ENCODE measurements at regions of chr5 and their contacts with region 1.

Region 1: GRCh38 chr5:141960449-141961202 is 2.6 kb upstream of the PCDH12 start:
- DNase-seq: peak; percentile 79 to 92
- ATAC-seq: peak; percentile 88 to 97
- H3K4me3 ChIP-seq: no peak overlapping the region
- H3K27ac ChIP-seq: peak overlapping the region; percentile 15 to 67; a peak in 5 of 6 replicates
- H3K4me1 ChIP-seq: 0 out of 3 replicates have a peak, but pooled peaks cover 4% of the 10 kb centered on the region
- CTCF ChIP-seq: peak; percentile 94
- EP300 ChIP-seq: no peak
- POLR2A ChIP-seq: no peak
- RAD21 ChIP-seq: peak; percentile 81 to 88

Region 2: GRCh38 chr5:140813119-140813518 is 1147.5 kb before region 1 on chr5:
- CTCF ChIA-PET with region 1: no interaction called
- POLR2A ChIA-PET with region 1: no interaction called
- DNase-seq: no peak
- ATAC-seq: no peak
- H3K4me3 ChIP-seq: no peak overlapping the region
- H3K27ac ChIP-seq: no peak overlapping the region
- H3K4me1 ChIP-seq: no peaks in the 10 kb centered on the region
- CTCF ChIP-seq: no peak
- EP300 ChIP-seq: no peak
- POLR2A ChIP-seq: no peak
- RAD21 ChIP-seq: no peak

Region 3: DNA sequence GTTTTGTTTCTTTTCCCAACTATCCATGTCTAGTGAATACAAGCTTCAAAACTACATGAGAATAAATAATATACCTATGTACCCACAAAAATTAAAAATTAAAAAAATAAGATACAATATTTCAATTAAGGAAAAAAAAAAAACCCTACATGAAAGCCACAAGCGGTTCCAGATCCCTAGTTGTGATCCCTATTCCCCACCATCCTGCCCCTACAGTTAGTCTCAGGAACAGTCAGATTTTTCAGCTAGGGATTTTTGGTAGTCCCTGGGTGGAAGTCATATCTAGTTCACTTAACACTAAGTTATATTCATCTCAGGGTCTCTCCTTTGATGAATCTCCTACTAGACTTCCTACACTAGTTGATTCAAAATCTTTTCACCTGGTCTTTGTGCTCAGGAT is 928.0 kb before region 1 on chr5:
- CTCF ChIA-PET with region 1: no interaction called
- POLR2A ChIA-PET with region 1: no interaction called
- DNase-seq: no peak
- ATAC-seq: no peak
- H3K4me3 ChIP-seq: no peak overlapping the region
- H3K27ac ChIP-seq: no peak overlapping the region
- H3K4me1 ChIP-seq: no peaks in the 10 kb centered on the region
- CTCF ChIP-seq: no peak
- EP300 ChIP-seq: no peak
- POLR2A ChIP-seq: no peak
- RAD21 ChIP-seq: no peak

Region 4: DNA sequence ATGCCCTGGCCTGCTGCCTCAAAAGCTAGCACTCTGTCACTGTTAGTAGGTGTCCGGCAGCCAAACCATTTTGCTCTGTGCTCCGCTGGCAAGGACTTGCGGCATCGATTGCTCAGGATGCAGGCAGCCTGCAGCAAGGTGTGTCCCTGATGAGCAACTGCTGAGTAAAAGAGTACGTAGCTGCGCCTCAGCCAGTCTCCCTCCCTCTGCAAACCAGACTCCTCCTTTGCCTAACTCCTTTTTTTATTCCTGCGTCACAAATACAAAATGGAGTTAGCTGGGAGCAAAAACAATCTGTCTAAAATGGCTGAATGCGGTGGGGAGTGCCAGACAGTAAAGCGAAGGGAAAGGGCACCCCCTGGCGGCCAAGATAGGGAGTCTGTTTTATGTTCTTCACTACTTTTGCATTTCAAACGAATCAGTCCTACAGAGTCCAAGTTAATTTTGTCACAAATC is 402.9 kb before region 1 on chr5:
- CTCF ChIA-PET with region 1: no interaction called
- POLR2A ChIA-PET with region 1: no interaction called
- DNase-seq: peak; percentile 31 to 83
- ATAC-seq: peak; percentile 84 to 91
- H3K4me3 ChIP-seq: no peak overlapping the region
- H3K27ac ChIP-seq: peak overlapping the region in 1 of 2 experiments; percentile 65; a peak in 2 of 6 replicates
- H3K4me1 ChIP-seq: no peaks in the 10 kb centered on the region
- CTCF ChIP-seq: peak; percentile 78
- EP300 ChIP-seq: no peak
- POLR2A ChIP-seq: no peak
- RAD21 ChIP-seq: peak; percentile 81 to 85

Region 5: DNA sequence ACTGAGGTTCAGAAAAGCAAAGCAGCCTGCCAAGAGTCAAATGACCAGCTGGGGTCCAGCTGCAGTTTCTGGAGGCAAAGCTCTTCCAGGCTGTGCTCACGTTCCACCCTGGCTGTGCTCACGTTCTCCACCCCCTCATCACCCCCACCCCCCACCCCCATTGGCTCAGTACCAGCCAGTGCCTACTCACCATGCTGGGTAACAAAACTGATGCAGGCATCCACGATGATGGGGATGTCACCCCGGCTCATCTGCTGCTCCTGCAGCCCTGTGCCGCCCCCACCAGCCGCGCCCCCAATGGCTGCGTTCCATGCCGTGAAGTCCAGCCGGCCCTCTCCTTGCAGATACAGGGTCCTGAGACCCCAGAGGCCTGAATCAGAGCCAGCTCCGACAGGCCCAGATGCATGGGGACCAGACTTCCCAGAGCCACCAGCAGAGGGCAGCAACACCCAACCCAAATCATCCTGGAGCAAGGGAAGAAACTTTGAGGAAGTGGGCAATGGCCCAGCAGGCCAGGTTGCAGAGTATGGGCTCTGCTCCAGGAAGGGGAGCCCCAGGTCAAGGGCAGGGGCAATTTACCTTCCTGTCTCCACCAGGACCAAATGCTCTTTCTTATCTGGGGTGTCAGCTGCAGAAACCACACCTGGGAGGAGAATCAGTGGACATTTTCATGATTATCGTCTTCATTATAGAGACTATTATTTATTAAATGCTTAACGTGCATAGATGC is 295.7 kb before region 1 on chr5:
- CTCF ChIA-PET with region 1: interaction called, 25 read pairs
- POLR2A ChIA-PET with region 1: no interaction called
- DNase-seq: peak; percentile 69 to 78
- ATAC-seq: peak; percentile 89 to 97
- H3K4me3 ChIP-seq: no peak overlapping the region
- H3K27ac ChIP-seq: no peak overlapping the region
- H3K4me1 ChIP-seq: peaks cover 4% of the 10 kb centered on the region; the same call in 1 of the 3 replicates
- CTCF ChIP-seq: peak; percentile 91
- EP300 ChIP-seq: no peak
- POLR2A ChIP-seq: no peak
- RAD21 ChIP-seq: peak; percentile 84

Region 6: GRCh38 chr5:141701360-141702119 is 259.1 kb before region 1 on chr5:
- CTCF ChIA-PET with region 1: interaction called, 325 read pairs
- POLR2A ChIA-PET with region 1: no interaction called
- DNase-seq: no peak
- ATAC-seq: peak; percentile 17 to 52; a peak in 3 of 6 replicates
- H3K4me3 ChIP-seq: peak overlapping the region; percentile 39; the same call in 1 of the 3 replicates
- H3K27ac ChIP-seq: no peak overlapping the region
- H3K4me1 ChIP-seq: 0 out of 3 replicates have a peak, but pooled peaks cover 4% of the 10 kb centered on the region
- CTCF ChIP-seq: no peak
- EP300 ChIP-seq: no peak
- POLR2A ChIP-seq: no peak
- RAD21 ChIP-seq: no peak

Region 7: GRCh38 chr5:141722266-141722665 is 238.4 kb before region 1 on chr5:
- CTCF ChIA-PET with region 1: interaction called, 10 read pairs
- POLR2A ChIA-PET with region 1: no interaction called
- DNase-seq: no peak
- ATAC-seq: no peak
- H3K4me3 ChIP-seq: no peak overlapping the region
- H3K27ac ChIP-seq: no peak overlapping the region
- H3K4me1 ChIP-seq: peaks cover 9% of the 10 kb centered on the region; the same call in 2 of the 3 replicates
- CTCF ChIP-seq: no peak
- EP300 ChIP-seq: no peak
- POLR2A ChIP-seq: no peak
- RAD21 ChIP-seq: no peak

Region 8: GRCh38 chr5:141889282-141889871 is 71.2 kb before region 1 on chr5:
- CTCF ChIA-PET with region 1: interaction called, 95 read pairs
- POLR2A ChIA-PET with region 1: no interaction called
- DNase-seq: peak in 1 of 2 experiments; percentile 31
- ATAC-seq: peak; percentile 71 to 75; a peak in 3 of 6 replicates
- H3K4me3 ChIP-seq: no peak overlapping the region
- H3K27ac ChIP-seq: no peak overlapping the region
- H3K4me1 ChIP-seq: no peaks in the 10 kb centered on the region
- CTCF ChIP-seq: peak; percentile 51
- EP300 ChIP-seq: no peak
- POLR2A ChIP-seq: no peak
- RAD21 ChIP-seq: peak; percentile 43 to 50; a peak in 3 of 5 replicates

Region 9: GRCh38 chr5:141923448-141924352 is 36.9 kb before region 1 on chr5 and contains the start of gene DELE1:
- CTCF ChIA-PET with region 1: interaction called, 13 read pairs
- POLR2A ChIA-PET with region 1: interaction called, 9 read pairs
- DNase-seq: peak; percentile 95 to 96
- ATAC-seq: peak; percentile 98 to 99
- H3K4me3 ChIP-seq: peak within 1 kb of the TSS; percentile 89
- H3K27ac ChIP-seq: peak within 1 kb of the TSS; percentile 92 to 99
- H3K4me1 ChIP-seq: peaks cover 12% of the 10 kb centered on the region
- CTCF ChIP-seq: no peak
- EP300 ChIP-seq: no peak
- POLR2A ChIP-seq: peak; percentile 80
- RAD21 ChIP-seq: no peak
- polyA plus RNA-seq, gene DELE1: 60.1 and 72.2 TPM in 2 replicates

Region 10: GRCh38 chr5:141976176-141976575 is 15.6 kb after region 1 on chr5:
- CTCF ChIA-PET with region 1: interaction called, 63 read pairs
- POLR2A ChIA-PET with region 1: no interaction called
- DNase-seq: no peak
- ATAC-seq: no peak
- H3K4me3 ChIP-seq: no peak overlapping the region
- H3K27ac ChIP-seq: no peak overlapping the region
- H3K4me1 ChIP-seq: peaks cover 10% of the 10 kb centered on the region; the same call in 2 of the 3 replicates
- CTCF ChIP-seq: no peak
- EP300 ChIP-seq: no peak
- POLR2A ChIP-seq: no peak
- RAD21 ChIP-seq: no peak

Region 11: DNA sequence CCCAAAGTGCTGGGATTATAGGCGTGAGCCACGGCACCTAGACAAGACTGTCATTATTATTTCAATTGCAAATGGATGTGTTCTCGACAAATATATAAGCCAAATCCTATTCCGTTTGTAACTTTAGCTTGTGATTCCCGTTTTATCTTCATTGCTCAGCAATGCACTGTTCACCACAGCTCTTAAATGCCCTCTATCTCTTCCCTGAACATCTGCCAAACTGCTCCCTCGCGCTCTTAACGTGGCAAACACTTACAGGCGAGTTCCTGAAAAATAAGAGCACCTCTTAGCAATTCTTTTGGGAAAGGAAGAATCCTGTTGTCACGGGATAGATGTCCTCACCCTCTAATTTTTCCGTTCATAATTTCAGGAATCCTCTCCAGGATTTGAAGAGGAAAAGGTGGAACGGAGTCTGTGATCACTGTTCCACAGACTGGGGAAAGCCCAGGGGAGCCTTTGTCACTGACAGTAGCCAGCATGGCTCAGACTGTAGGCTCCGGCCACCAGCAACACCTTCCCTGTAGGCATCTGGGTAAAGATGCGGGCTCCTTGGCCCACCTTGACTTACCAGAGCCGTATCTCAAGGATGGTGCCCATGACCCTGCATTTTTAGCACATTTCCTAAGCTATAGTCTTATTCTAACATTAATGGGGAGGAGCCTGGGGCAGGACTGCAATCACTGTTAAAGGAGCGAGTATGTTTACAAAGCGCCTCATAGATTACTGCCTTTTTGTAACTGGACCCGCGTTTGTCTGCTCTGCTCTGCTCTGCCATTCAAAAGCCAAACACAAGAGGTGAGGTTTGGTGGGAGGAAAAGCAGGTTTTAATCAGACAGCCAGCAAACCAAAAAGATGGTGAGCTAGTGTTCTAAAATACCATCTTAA is 72.4 kb after region 1 on chr5:
- CTCF ChIA-PET with region 1: no interaction called
- POLR2A ChIA-PET with region 1: no interaction called
- DNase-seq: no peak
- ATAC-seq: peak in 1 of 2 experiments; percentile 23; a peak in 1 of 6 replicates
- H3K4me3 ChIP-seq: no peak overlapping the region
- H3K27ac ChIP-seq: no peak overlapping the region
- H3K4me1 ChIP-seq: no peaks in the 10 kb centered on the region
- CTCF ChIP-seq: no peak
- EP300 ChIP-seq: no peak
- POLR2A ChIP-seq: no peak
- RAD21 ChIP-seq: no peak

Measured in A549 (cell line).